GM13977 (cell line): ENCODE measurements at regions of chr4 and their contacts with region 1.

Region 1: DNA sequence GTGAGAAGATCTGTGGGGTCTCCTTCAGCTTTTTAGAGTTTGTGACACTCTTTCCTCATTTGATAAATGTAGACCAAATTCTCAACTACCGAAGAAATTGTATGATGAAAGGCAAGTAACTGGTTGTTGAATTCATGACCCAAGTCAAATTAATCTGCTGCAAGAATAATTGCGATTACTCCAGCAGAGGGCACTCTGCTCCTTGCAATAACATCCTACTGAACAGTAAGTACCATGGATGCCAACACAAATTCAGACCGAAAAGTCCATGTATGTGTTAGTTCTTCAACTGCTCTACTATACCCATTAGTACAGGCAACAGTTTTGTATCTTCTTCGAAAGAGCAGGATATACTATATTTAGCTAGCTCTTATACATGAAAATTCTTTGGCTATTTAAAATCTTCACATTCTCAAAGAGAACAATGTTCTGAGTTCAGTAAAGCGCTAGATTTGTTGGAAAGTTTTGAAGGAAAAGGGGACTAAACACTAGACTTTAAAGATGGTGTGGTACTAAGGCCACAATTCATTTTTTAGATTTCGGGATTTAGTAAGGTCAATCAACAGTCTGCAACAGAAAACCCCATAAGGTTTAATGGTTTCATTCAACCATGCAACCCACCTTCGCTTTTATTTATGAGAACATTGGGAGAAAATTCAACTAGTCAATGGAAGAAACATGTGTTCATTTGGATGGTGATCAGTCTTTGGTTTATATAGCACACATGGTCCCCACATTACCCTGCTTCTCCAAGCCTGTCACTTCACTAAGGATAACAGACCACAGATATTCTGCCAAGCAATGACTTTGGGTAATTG is 105.4 kb upstream of the TBC1D9 start:
- DNase-seq: peak; percentile 42
- CTCF ChIP-seq: peak; percentile 80

Region 2: DNA sequence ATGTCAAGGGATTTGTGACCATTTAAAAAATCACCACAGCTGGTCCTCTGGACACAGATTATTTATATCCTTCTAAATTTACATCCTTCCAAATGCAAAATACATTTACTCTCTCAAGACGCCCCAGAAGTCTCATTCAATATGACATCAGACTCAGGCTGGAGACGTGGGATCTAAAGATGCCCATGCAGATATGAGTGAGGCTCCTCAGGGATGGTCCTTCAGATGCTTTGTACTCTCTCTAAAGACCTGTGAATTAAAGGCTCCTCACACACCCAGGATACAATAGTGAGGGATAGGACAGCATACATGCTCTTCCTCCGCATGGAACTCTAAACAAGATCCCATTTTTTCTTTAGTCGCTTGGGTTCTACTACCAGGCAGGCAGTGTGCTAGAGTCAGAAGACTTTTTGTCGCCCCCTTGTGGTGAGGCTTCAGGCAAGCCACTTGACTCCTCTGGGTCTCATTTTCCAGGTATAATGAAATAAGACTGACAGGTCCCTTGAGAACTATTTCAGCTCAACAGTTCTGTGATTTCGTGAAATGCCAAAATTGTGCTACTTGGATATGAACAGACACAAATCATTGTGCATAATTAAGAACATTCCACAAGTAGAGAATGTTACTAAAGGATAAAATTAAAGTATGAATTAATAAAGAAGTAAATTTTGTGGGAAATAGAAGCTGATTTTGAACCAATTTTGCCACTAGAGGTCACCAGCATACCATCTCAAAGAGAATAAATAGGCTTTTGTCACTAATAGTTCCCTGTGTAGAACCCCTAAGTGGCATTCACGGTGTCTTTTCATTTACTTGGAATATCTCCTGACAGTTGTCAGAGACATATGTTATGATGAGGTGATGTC is 501.8 kb before region 1 on chr4:
- in situ Hi-C with region 1: loop called (anchors 25 kb)
- DNase-seq: peak; percentile 53
- CTCF ChIP-seq: peak; percentile 77

Region 3: DNA sequence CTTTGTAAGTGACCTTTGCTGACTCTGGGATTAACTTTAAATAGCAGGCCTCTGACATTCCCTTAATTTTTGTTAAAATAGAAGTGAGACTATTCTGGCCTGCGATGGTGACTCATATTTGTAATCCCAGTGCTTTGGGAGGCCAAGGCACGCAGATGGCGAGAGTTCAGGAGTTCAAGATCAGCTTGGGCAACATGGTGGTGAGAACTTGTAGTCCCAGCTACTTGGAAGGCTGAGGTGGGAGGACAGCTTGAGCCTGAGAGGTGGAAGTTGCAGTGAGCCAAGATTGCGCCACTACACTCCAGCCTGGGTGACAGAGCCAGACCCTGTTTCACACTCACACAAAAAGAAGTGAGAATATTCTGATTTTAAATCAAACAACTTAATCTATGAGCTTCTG is 386.5 kb after region 1 on chr4:
- in situ Hi-C with region 1: no loop called
- DNase-seq: no peak
- CTCF ChIP-seq: no peak